Activated CD8-positive, alpha-beta T cell treated with anti-CD3 and anti-CD28 coated beads, Interleukin-2, amount 10 ng/mL, durations not matched to agents 7 days and 5 days (primary cell): ENCODE measurements at regions of chr4 and their contacts with region 1.

Region 1: GRCh38 chr4:111641955-111642579 is 503.2 kb upstream of the FAM241A start:
- DNase-seq: peak; percentile 64
- ATAC-seq: peak; percentile 70
- H3K4me3 Mint-ChIP-seq: no peak overlapping the region
- H3K27ac Mint-ChIP-seq: no peak overlapping the region
- H3K4me1 Mint-ChIP-seq: no peaks in the 10 kb centered on the region
- H3K27me3 Mint-ChIP-seq: no peaks in the 10 kb centered on the region

Region 2: GRCh38 chr4:111854494-111855087 is 212.5 kb after region 1 on chr4:
- CTCF ChIA-PET with region 1: interaction called, 11 read pairs
- POLR2A ChIA-PET with region 1: no interaction called
- DNase-seq: peak; percentile 28
- ATAC-seq: no peak
- H3K4me3 Mint-ChIP-seq: no peak overlapping the region
- H3K27ac Mint-ChIP-seq: no peak overlapping the region
- H3K4me1 Mint-ChIP-seq: no peaks in the 10 kb centered on the region
- H3K27me3 Mint-ChIP-seq: no peaks in the 10 kb centered on the region